ENCODE measurements at regions of chr1 and their contacts with region 1.

Region 1: GRCh38 chr1:151238467-151238739 is 16.1 kb upstream of the PSMD4 start:
- DNase-seq: no peak
- ATAC-seq: peak in 2 of 4 donors; percentile 49 to 73
- H3K4me3 ChIP-seq: no peak overlapping the region
- H3K27ac ChIP-seq: peak overlapping the region in 2 of 12 donors; percentile 9 to 51
- H3K4me1 ChIP-seq: peaks cover 0 to 12% (median 0%) of the 10 kb centered on the region in 12 donors
- H3K27me3 ChIP-seq: no peaks in the 10 kb centered on the region
- CTCF ChIP-seq: no peak
- POLR2A ChIP-seq: no peak

Region 2: DNA sequence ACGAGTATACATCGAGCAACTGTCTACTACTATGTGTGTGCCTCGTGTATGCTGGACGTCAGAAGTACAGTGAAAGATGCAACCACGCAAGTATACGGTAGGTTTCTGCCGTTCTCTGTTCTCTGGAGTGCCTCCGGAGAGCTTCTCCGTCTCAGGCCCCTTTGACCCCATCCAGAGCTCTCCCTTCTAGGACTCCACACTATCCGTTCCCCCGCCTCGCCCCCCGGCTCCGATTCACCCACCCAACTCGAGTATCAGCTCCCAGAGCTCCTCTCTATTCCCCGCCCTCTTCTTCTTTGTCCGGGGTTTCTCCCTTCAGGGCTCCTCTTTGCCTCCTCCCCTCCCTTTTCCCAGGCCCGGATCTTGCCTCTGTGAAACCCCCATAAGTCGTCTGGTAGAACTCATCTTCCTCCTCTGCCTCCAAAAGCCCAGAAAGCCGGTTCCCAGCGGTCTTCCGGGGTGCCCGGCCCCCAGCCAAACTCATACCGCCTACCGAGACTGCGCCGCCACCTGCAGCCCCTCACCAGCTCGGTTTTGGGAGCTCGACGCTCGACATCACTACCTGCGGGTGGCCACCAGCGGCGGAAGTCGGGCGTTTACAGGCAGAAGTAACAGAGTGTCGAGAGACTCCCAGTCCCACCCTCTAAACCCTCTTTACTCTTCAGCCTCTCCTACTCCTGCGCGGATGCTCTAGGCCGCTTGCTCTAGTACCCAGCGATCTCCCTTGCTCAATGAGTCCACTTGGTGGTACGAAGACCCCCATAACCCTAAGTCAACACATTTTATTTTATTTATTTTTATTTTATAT is 48.6 kb before region 1 on chr1 and contains the start of gene VPS72:
- intact Hi-C with region 1: loop called in 1 of 10 experiments (anchors 10 kb)
- DNase-seq: peak; percentile 86 to 90 (median 88)
- ATAC-seq: peak; percentile 93 to 98 (median 98)
- H3K4me3 ChIP-seq: peak within 1 kb of the TSS; percentile 54 to 95 (median 82)
- H3K27ac ChIP-seq: peak within 1 kb of the TSS; percentile 45 to 90 (median 80)
- H3K4me1 ChIP-seq: peaks cover 0 to 32% (median 18%) of the 10 kb centered on the region in 12 donors
- H3K27me3 ChIP-seq: no peaks in the 10 kb centered on the region
- CTCF ChIP-seq: peak in 3 of 12 donors; percentile 2 to 24 (median 7)
- POLR2A ChIP-seq: peak in 1 of 2 donors; percentile 57
- total RNA-seq, gene VPS72: 29.6 to 49.1 (median 38.1) TPM

Region 3: DNA sequence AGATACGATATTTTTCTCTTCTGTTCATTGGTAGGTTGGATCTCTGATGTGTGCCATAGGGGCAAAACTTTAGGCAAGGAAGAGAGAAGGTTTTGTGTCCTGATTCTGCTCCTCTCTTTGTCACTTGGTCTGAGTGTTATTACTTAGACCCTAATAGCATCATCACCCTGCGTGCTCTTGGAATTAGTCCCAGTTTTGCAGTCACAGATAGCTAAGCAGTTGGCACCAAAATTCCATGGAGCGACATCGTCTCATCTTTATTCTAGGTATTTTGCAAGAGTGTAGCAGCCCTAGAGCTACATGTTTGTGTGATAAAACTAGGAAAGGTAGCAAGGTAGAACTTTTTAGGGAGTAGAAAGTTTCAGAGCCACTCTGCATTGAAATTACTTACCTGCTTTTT is 16.3 kb before region 1 on chr1:
- intact Hi-C with region 1: no loop called
- DNase-seq: no peak
- ATAC-seq: peak; percentile 22 to 69 (median 54)
- H3K4me3 ChIP-seq: no peak overlapping the region
- H3K27ac ChIP-seq: no peak overlapping the region
- H3K4me1 ChIP-seq: peaks cover 0 to 24% (median 4%) of the 10 kb centered on the region in 12 donors
- H3K27me3 ChIP-seq: no peaks in the 10 kb centered on the region
- CTCF ChIP-seq: no peak
- POLR2A ChIP-seq: no peak